Common myeloid progenitor, CD34-positive (primary cell): ENCODE measurements at regions of chr16 and their contacts with region 1.

Region 1: DNA sequence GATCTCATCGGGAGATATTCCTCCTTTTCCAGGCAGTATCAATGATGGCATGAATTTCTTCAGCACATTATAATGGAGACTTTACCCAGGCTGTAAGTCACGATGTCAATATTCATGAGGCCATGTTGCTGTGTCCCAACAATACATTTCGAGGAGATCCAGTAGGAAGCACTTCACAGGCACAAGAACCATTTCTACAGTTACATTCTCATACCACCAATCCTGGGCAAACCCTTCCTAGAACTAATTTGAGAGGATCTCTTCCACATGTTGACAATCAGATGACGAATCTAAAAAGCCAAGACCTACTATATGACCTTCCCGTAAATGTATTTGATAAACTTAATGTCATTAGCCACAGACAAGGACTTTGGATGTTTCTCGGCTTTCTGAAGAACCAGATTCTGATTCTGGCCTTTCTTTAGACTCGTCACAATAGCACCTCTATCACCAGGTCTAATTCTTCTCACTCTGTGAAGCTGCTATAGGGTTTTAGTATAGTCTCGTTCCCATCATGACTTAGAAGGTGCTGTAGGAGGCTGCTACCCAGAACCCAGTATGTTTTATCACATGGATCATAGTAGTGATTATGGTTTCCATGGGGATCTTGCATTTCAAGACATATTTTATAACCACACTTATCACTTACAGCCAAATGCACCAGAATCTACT is 40.2 kb downstream of the C16orf87 start:
- DNase-seq: no peak
- H3K4me3 ChIP-seq: peak overlapping the region in 5 of 7 experiments; percentile 65 to 82 (median 72)
- H3K27ac ChIP-seq: peak overlapping the region in 1 of 2 experiments; percentile 35
- H3K4me1 ChIP-seq: peaks cover 0 to 14% (median 4%) of the 10 kb centered on the region in 4 experiments
- H3K27me3 ChIP-seq: no peaks in the 10 kb centered on the region

Region 2: DNA sequence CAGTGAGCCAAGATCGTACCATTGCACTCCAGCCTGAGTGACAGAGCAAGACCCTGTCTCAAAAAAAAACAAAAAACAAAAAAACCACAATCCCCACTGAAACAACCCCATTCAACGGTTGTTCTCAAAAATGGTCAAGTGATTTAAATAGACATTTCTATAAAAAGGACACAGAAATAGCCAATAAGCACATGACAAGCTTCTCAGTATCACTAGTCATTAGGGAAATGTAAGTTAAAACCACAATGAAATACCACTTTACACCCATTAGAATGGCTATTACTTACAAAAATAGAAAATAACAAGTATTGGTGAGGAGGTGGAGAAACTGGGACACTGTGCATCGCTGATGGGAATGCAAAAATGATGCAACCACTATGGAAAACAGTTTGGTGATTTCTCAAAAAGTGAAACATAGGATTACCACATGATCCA is 16.0 kb before region 1 on chr16:
- CTCF ChIA-PET with region 1: no interaction called
- POLR2A ChIA-PET with region 1: no interaction called
- DNase-seq: no peak
- H3K4me3 ChIP-seq: no peak overlapping the region
- H3K27ac ChIP-seq: no peak overlapping the region
- H3K4me1 ChIP-seq: peaks cover 0 to 9% (median 0%) of the 10 kb centered on the region in 4 experiments
- H3K27me3 ChIP-seq: no peaks in the 10 kb centered on the region

Region 3: DNA sequence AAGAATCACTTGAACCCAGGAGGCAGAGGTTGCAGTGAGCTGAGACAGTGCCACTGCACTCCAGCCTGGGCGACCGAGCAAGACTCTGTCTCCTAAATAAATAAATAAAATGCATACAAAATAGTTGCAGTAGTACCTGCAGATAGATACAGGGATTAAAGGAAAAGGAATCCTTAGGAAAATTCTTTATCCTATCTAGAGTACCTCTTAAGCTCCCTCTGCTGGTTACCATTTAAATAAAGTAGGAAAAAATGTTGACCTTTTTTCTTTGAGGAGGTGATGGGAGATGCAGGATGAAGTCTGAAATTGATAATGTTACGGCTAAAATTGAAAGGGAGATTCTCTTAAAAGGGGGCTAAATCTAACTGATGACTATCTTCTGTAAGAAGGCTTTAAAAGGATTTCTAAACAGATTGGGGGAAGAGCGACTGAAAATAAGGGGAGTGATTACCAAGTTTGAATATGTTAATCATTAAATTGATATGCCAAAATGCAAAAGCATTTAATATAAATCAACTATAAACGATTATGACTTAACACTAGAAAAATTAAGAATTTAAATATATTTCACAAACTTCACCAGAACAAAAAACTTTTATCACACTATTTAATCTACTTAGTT is 10.8 kb after region 1 on chr16:
- CTCF ChIA-PET with region 1: interaction called, 17 read pairs
- POLR2A ChIA-PET with region 1: no interaction called
- DNase-seq: no peak
- H3K4me3 ChIP-seq: no peak overlapping the region
- H3K27ac ChIP-seq: no peak overlapping the region
- H3K4me1 ChIP-seq: no peaks in the 10 kb centered on the region
- H3K27me3 ChIP-seq: no peaks in the 10 kb centered on the region